Activated CD4-positive, alpha-beta T cell treated with anti-CD3 and anti-CD28 coated beads, Interleukin-2, amount 10 ng/mL, durations not matched to agents 24 days and 14 days (primary cell): ENCODE measurements at regions of chr1 and their contacts with region 1.

Region 1: DNA sequence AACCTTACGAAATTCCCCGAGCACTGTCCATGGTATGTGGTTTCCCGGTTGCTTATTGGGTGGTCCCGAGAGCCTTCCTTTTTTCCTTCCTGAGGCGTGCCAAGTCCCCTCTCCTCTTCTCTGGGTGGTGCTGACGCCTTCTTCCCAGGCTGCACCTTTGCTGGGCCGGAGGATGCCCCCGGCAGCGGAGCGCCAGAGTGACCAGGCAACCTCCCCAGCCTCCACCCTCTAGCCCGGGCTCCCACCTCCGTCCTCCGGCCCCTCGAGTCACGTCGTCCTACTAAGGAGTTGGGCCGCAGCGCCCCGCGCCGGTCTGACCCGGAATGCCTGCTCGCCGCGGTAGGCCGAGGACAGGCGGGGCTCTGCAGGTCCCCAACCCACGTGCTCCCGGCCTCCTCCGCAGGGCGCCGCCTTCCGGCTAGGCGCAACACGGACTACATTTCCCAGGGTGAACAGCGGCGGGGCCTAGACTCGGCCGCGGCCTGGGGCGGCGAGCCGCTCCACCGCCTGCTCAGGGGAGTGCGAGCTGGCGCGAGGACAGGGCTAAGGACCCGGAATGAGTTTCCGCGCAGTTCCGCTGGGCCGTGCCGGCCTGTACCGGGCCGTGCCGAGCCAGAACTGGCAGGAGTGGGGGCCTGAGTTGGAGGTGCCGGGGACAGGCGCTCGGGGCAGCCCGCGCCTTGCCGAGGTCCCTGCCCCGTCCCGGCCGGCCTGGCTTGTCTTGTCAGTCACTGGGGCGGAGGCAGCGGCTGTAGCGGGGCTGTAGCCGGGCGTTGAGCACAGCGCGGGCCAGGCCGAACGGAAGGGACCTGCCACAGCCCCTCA is at the start of gene IPO13:
- DNase-seq: peak; percentile 99
- H3K4me3 Mint-ChIP-seq: peak within 1 kb of the TSS; percentile 99
- H3K27ac Mint-ChIP-seq: peak within 1 kb of the TSS; percentile 97
- H3K4me1 Mint-ChIP-seq: peaks cover 44% of the 10 kb centered on the region
- H3K27me3 Mint-ChIP-seq: no peaks in the 10 kb centered on the region
- total RNA-seq, gene IPO13: 26.3 and 26.6 TPM in 2 replicates

Region 2: GRCh38 chr1:43650310-43651085 is 295.9 kb before region 1 on chr1:
- intact Hi-C with region 1: loop called (anchors 2 kb)
- DNase-seq: peak; percentile 97
- H3K4me3 Mint-ChIP-seq: peak overlapping the region; percentile 91
- H3K27ac Mint-ChIP-seq: peak overlapping the region; percentile 98
- H3K4me1 Mint-ChIP-seq: peaks cover 25% of the 10 kb centered on the region
- H3K27me3 Mint-ChIP-seq: peaks cover 5% of the 10 kb centered on the region

Region 3: GRCh38 chr1:43763497-43763973 is 182.9 kb before region 1 on chr1:
- intact Hi-C with region 1: loop called (anchors 1 kb)
- DNase-seq: peak; percentile 85
- H3K4me3 Mint-ChIP-seq: no peak overlapping the region
- H3K27ac Mint-ChIP-seq: no peak overlapping the region
- H3K4me1 Mint-ChIP-seq: peaks cover 2% of the 10 kb centered on the region
- H3K27me3 Mint-ChIP-seq: no peaks in the 10 kb centered on the region

Region 4: DNA sequence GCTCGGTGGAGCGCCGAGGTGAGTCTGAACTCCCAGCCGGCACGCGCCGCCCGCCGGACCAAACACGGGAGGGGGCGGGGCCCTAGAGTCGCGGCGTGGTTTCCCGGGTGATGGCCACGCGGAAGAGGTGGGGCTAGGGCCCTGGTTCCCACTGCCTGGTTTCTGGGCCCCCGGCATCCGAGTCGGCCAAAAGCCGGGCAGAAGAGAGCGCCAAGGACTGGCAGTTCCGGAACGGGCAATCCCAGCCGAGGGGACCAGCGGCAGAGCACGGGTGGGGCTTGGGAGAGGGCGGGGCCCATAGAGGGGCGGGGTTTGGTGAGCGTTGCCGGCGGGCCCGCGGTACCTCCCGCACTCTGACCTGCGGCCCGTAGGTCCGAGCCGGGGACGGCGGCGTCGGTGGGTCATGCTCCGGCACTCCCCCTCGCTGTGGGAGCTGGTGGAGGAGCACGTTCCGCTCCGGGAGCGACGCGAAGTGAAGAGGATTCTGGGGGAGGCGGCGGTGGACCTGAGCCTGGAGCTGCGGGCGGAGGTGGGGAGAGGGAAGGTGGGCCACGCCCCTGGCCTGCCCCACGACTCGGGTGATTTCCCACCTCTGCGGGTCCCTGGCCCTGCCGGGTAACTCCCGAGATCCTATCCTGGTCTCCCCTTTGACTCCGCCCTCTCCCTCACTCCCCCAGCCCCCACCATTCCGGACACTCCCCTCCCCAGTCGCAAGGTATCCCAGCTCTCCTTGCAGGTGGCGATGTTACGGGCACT is 45.2 kb after region 1 on chr1 and contains the start of gene CCDC24:
- intact Hi-C with region 1: loop called (anchors 1 kb)
- DNase-seq: peak; percentile 95
- H3K4me3 Mint-ChIP-seq: peak within 1 kb of the TSS; percentile 92
- H3K27ac Mint-ChIP-seq: peak within 1 kb of the TSS; percentile 84
- H3K4me1 Mint-ChIP-seq: peaks cover 14% of the 10 kb centered on the region
- H3K27me3 Mint-ChIP-seq: no peaks in the 10 kb centered on the region
- total RNA-seq, gene CCDC24: 3.0 and 4.3 TPM in 2 replicates

Region 5: DNA sequence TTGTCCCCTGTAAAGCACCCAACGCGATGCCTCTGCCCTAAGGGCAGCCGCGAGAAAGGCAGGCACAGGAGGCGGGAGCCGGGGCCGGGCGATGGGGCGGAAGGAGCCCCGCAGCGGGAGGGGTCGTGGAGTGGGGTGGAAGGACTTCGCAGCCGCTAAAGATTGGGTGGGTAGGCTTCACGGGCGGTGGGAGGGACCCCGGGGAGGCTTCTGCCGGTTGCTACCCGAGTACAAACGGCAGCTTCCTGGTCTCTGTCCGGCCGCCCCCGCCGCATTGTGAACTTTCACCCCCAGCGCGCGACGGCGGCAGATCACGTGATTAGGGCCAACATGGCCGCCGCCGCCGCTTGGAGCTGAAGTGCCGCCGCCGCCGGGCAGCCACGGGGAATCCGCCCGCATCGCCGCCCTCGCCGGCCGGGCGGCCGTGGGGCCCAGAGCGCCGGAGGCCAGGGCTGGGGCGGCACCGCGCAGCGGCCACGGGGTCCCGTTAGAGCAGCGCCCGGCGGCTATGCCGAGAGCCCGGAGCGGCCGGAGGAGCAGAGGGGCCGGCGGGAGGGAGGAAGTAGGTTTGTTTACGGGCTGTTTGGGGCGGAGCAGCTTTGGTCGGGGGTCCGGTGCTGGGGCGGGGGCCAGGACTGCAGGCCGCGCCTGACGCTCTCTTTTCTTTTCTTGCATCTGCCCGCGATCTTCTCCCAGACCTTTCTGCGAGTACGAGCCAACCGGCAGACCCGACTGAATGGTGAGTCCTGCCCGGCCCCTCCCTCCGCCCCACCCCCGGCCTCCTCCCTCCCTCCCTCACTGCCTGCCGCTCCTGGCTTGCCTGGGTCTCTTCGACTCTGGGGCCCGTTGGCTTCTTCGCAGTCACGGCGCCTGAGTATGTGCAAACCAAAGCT is 685.4 kb after region 1 on chr1:
- intact Hi-C with region 1: loop called (anchors 2 kb)
- DNase-seq: peak; percentile 97
- H3K4me3 Mint-ChIP-seq: peak overlapping the region; percentile 89
- H3K27ac Mint-ChIP-seq: peak overlapping the region; percentile 98
- H3K4me1 Mint-ChIP-seq: peaks cover 32% of the 10 kb centered on the region
- H3K27me3 Mint-ChIP-seq: no peaks in the 10 kb centered on the region